ENCODE measurements at regions of chr14 and their contacts with region 1.

Region 1: DNA sequence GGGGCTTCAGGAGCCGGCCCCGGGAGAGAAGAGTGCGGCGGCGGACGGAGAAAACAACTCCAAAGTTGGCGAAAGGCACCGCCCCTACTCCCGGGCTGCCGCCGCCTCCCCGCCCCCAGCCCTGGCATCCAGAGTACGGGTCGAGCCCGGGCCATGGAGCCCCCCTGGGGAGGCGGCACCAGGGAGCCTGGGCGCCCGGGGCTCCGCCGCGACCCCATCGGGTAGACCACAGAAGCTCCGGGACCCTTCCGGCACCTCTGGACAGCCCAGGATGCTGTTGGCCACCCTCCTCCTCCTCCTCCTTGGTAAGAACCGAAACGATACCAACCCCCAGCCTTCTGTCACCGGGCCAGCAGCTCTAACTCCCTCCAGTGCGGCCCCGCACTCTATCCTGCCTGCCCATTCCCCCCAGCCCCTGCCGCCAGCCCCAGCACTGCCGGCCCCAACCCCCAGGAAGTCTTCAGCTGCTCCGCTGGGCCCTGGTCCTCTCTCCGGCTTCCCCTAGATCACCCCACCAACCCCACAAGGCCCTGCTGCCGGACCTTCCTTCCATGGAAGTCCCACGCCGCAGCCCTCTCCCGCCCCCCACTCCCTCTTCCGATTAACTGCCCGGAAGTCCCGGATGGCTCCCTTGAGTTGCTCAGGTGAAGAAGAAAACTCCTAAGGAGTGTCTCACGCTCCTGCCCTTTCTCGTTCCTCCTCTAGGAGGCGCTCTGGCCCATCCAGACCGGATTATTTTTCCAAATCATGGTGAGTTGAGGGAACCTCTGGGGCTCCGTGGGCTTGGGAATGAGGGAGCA is 693 bp downstream of the LRP10 start:
- DNase-seq: peak; percentile 84
- ATAC-seq: peak; percentile 62
- H3K4me3 ChIP-seq: peak overlapping the region; percentile 66 to 93 (median 82)
- H3K27ac ChIP-seq: peak overlapping the region; percentile 85
- H3K4me1 ChIP-seq: peaks cover 35% of the 10 kb centered on the region
- H3K27me3 ChIP-seq: no peaks in the 10 kb centered on the region; a peak in 1 of 5 replicates
- CTCF ChIP-seq: peak; percentile 99
- EP300 ChIP-seq: peak in 1 of 2 experiments; percentile 54; a peak in 2 of 4 replicates
- POLR2A ChIP-seq: no peak
- RAD21 ChIP-seq: peak; percentile 68

Region 2: DNA sequence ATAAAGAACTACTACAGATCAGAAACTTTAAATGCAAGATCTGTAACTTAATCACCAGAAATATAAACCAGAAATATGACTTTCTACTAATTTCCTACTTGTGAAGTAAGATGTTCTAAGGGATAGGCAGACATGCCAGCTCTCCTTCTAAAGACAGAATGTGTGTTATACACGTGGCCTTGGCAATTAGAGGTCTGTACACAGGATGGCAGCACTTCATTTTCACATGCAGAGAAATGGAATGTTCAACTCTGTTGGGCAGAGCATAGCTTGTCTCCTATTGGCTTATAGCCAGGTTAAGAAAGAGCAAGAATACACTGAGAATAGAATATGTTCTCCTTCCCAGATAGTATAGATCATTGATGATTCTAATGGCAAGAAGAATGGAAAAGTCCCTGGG is 687.0 kb before region 1 on chr14:
- CTCF ChIA-PET with region 1: no interaction called
- POLR2A ChIA-PET with region 1: no interaction called
- in situ Hi-C with region 1: no loop called
- intact Hi-C with region 1: no loop called
- DNase-seq: peak; percentile 24
- ATAC-seq: peak; percentile 76
- H3K4me3 ChIP-seq: no peak overlapping the region
- H3K27ac ChIP-seq: no peak overlapping the region
- H3K4me1 ChIP-seq: peaks cover 6% of the 10 kb centered on the region; the same call in 1 of the 2 replicates
- H3K27me3 ChIP-seq: no peaks in the 10 kb centered on the region
- CTCF ChIP-seq: no peak; the same call in 1 of the 2 replicates
- EP300 ChIP-seq: no peak
- POLR2A ChIP-seq: no peak
- RAD21 ChIP-seq: no peak

Region 3: GRCh38 chr14:22829661-22830442 is 42.4 kb before region 1 on chr14 and contains the start of gene MRPL52:
- CTCF ChIA-PET with region 1: no interaction called
- POLR2A ChIA-PET with region 1: interaction called, 14 read pairs
- in situ Hi-C with region 1: no loop called
- intact Hi-C with region 1: no loop called
- DNase-seq: peak; percentile 97
- ATAC-seq: peak; percentile 94
- H3K4me3 ChIP-seq: peak within 1 kb of the TSS; percentile 74 to 97 (median 88)
- H3K27ac ChIP-seq: peak within 1 kb of the TSS; percentile 65
- H3K4me1 ChIP-seq: peaks cover 24% of the 10 kb centered on the region
- H3K27me3 ChIP-seq: no peaks in the 10 kb centered on the region; a peak in 1 of 5 replicates
- CTCF ChIP-seq: peak; percentile 37
- EP300 ChIP-seq: peak in 1 of 2 experiments; percentile 69; a peak in 1 of 4 replicates
- POLR2A ChIP-seq: peak; percentile 91 to 97
- RAD21 ChIP-seq: peak; percentile 53; the same call in 1 of the 2 replicates
- total RNA-seq, gene MRPL52: 329 and 420 TPM in 2 replicates

Region 4: DNA sequence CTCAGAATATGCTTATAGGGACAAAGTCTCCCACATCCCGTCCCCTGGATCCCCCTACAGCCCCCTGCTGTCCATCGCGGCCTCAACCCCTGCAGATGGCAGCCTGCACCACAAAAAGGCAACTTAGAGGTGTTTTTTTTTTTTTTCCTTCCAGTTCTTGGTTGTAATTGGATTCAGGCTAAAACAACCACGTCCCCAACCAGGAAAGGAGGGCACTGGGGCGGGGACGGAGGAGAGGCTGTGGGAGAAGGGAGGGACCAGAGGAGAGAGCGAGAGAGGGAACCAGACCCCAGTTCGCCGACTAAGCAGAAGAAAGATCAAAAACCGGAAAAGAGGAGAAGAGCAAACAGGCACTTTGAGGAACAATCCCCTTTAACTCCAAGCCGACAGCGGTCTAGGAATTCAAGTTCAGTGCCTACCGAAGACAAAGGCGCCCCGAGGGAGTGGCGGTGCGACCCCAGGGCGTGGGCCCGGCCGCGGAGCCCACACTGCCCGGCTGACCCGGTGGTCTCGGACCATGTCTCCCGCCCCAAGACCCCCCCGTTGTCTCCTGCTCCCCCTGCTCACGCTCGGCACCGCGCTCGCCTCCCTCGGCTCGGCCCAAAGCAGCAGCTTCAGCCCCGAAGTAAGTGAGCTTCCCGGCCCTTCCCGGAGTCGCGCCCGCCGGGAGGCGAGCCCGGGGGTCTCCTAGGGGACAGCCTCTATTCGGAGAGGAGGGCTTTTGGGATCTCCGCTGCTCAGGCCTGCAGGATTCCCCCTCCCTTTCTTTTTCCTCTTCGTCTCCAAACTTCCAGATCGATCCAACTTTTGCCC is 35.7 kb before region 1 on chr14 and contains the start of gene MMP14:
- CTCF ChIA-PET with region 1: no interaction called
- POLR2A ChIA-PET with region 1: interaction called, 12 read pairs
- in situ Hi-C with region 1: no loop called
- intact Hi-C with region 1: no loop called
- DNase-seq: no peak
- ATAC-seq: peak; percentile 11
- H3K4me3 ChIP-seq: peak within 1 kb of the TSS; percentile 55 to 71 (median 57)
- H3K27ac ChIP-seq: no peak within 1 kb of the TSS
- H3K4me1 ChIP-seq: peaks cover 43% of the 10 kb centered on the region
- H3K27me3 ChIP-seq: no peaks in the 10 kb centered on the region
- CTCF ChIP-seq: peak; percentile 42; the same call in 1 of the 2 replicates
- EP300 ChIP-seq: no peak
- POLR2A ChIP-seq: 0 out of 4 replicates have a peak, but pooled peaks of 1 of the 2 experiments have one; percentile 8
- RAD21 ChIP-seq: no peak
- total RNA-seq, gene MMP14: 1.6 and 5.2 TPM in 2 replicates

Region 5: GRCh38 chr14:22861651-22862050 is 10.6 kb before region 1 on chr14:
- CTCF ChIA-PET with region 1: no interaction called
- POLR2A ChIA-PET with region 1: interaction called, 14 read pairs
- in situ Hi-C with region 1: no loop called
- intact Hi-C with region 1: no loop called
- DNase-seq: peak; percentile 41
- ATAC-seq: peak; percentile 87
- H3K4me3 ChIP-seq: no peak overlapping the region
- H3K27ac ChIP-seq: no peak overlapping the region
- H3K4me1 ChIP-seq: peaks cover 26% of the 10 kb centered on the region
- H3K27me3 ChIP-seq: no peaks in the 10 kb centered on the region
- CTCF ChIP-seq: no peak
- EP300 ChIP-seq: no peak
- POLR2A ChIP-seq: no peak
- RAD21 ChIP-seq: no peak

Region 6: DNA sequence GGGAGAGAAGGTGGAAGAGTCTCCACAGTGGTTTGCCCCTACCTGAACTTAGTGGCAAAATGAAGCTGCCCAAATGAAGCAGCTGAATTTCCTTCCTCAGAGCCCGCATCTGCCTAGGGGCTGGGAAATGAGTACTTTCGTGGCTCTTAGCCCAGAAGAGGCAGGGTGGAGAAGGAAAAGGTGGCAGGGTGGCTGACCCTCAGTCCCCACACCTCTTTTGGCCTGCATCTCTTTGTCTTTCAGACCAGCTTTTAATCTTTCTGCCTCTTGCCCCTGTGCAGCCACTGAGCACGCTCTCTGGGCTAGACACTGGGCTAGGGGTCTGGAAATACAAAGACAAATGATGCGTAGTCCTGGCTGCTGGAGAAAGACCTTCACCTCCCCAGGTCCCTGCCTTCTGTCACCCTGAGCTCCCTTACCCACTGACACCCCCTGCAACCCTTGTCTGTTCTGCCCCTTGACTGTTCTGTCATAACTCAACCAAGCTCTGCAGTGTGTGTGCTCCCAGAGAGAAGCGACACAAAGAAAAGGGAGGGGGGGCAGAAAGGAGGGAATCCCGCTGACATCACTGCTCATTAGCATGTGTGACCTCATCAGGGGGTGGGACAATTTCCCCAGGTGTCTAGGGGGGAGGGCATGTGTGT is 10.4 kb after region 1 on chr14:
- CTCF ChIA-PET with region 1: no interaction called
- POLR2A ChIA-PET with region 1: interaction called, 53 read pairs
- in situ Hi-C with region 1: no loop called
- intact Hi-C with region 1: no loop called
- DNase-seq: no peak
- ATAC-seq: peak; percentile 20
- H3K4me3 ChIP-seq: no peak overlapping the region
- H3K27ac ChIP-seq: no peak overlapping the region
- H3K4me1 ChIP-seq: peaks cover 27% of the 10 kb centered on the region
- H3K27me3 ChIP-seq: peaks cover 8 to 54% of the 10 kb centered on the region in 2 experiments; a peak in 4 of 5 replicates
- CTCF ChIP-seq: no peak
- EP300 ChIP-seq: no peak
- POLR2A ChIP-seq: no peak; a peak in 1 of 4 replicates
- RAD21 ChIP-seq: no peak

Region 7: DNA sequence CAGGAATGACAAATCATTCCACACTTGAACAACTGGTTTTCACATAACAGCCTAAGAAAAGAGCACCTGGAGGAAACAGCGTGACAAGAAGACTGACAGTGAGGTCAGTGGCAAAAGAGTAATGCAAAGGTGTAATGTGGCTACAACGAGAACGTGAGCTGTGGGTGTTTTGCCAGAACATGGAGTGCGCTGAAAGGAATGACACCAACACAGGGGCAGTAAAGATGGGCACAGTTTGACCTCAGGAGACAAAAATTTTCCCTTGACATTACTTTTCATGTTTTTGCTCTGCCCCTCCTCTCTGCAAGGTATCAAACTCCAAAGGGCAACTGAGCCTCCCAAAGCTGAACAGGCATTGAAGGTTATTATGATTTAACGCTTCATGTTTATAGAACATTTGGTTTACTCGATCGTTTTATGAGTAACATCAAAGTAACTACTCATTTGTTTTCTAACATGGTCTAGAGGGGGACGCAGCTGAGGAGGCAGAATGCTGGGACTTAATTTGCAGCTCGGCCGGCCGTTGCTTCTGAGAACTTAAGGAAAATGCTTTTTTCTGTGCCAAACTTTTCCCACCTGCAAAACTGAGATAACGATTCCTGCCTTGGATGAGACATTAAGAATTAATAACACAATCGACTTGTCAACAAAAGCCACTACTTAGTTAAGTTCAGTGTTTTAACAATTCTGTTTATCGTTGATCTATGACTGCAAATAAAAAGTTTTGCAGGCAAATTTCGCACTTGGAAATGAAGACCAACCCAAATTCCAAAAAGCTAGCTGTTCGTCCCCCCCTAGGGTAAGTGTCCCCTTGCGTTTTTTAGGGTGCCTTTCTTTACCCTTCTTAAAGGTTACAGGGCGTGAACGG is 83.7 kb after region 1 on chr14:
- CTCF ChIA-PET with region 1: interaction called, 3 read pairs
- POLR2A ChIA-PET with region 1: interaction called, 10 read pairs
- in situ Hi-C with region 1: no loop called
- intact Hi-C with region 1: no loop called
- DNase-seq: peak; percentile 48
- ATAC-seq: peak; percentile 27
- H3K4me3 ChIP-seq: peak overlapping the region; percentile 73 to 78 (median 77)
- H3K27ac ChIP-seq: peak overlapping the region; percentile 78
- H3K4me1 ChIP-seq: peaks cover 47% of the 10 kb centered on the region
- H3K27me3 ChIP-seq: no peaks in the 10 kb centered on the region; a peak in 1 of 5 replicates
- CTCF ChIP-seq: no peak
- EP300 ChIP-seq: peak in 1 of 2 experiments; percentile 25; a peak in 1 of 4 replicates
- POLR2A ChIP-seq: no peak
- RAD21 ChIP-seq: no peak

Region 8: DNA sequence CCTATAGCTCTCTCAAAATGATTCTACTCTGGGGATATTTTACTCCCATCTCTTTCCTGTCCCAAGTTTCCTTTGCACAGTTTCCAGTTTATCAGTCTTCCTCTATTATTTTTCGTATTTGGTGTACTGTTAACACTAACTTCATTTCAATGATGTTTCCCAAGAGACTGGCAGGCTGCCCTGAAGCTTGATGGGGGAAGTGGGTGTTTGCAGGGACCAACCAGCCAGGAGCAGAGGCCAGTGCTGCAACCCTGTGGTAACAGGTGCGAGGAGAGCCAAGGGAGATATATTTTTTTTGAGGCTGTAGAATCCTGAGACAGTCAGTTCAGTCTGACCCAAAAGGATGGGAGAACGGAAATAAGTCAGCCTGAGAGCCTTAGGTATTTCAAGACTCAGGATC is 258.6 kb after region 1 on chr14:
- CTCF ChIA-PET with region 1: no interaction called
- POLR2A ChIA-PET with region 1: no interaction called
- in situ Hi-C with region 1: no loop called
- intact Hi-C with region 1: no loop called
- DNase-seq: no peak
- ATAC-seq: no peak
- H3K4me3 ChIP-seq: no peak overlapping the region
- H3K27ac ChIP-seq: no peak overlapping the region
- H3K4me1 ChIP-seq: no peaks in the 10 kb centered on the region
- H3K27me3 ChIP-seq: peaks cover 22 to 60% of the 10 kb centered on the region in 2 experiments
- CTCF ChIP-seq: no peak
- EP300 ChIP-seq: no peak
- POLR2A ChIP-seq: no peak
- RAD21 ChIP-seq: no peak